ENCODE measurements at regions of chr9 and their contacts with region 1.

Region 1: GRCh38 chr9:128067876-128068613 is at the start of gene SLC25A25:
- DNase-seq: peak; percentile 100
- H3K4me3 Mint-ChIP-seq: peak within 1 kb of the TSS; percentile 92
- H3K27ac Mint-ChIP-seq: peak within 1 kb of the TSS; percentile 83
- H3K4me1 Mint-ChIP-seq: peaks cover 53% of the 10 kb centered on the region
- H3K27me3 Mint-ChIP-seq: no peaks in the 10 kb centered on the region
- total RNA-seq, gene SLC25A25: 13.4 and 13.5 TPM in 2 replicates

Region 2: GRCh38 chr9:127785023-127785932 is 282.8 kb before region 1 on chr9:
- intact Hi-C with region 1: loop called (anchors 5 kb)
- DNase-seq: peak; percentile 87
- H3K4me3 Mint-ChIP-seq: peak overlapping the region; percentile 96
- H3K27ac Mint-ChIP-seq: peak overlapping the region; percentile 99
- H3K4me1 Mint-ChIP-seq: peaks cover 67% of the 10 kb centered on the region
- H3K27me3 Mint-ChIP-seq: no peaks in the 10 kb centered on the region

Region 3: DNA sequence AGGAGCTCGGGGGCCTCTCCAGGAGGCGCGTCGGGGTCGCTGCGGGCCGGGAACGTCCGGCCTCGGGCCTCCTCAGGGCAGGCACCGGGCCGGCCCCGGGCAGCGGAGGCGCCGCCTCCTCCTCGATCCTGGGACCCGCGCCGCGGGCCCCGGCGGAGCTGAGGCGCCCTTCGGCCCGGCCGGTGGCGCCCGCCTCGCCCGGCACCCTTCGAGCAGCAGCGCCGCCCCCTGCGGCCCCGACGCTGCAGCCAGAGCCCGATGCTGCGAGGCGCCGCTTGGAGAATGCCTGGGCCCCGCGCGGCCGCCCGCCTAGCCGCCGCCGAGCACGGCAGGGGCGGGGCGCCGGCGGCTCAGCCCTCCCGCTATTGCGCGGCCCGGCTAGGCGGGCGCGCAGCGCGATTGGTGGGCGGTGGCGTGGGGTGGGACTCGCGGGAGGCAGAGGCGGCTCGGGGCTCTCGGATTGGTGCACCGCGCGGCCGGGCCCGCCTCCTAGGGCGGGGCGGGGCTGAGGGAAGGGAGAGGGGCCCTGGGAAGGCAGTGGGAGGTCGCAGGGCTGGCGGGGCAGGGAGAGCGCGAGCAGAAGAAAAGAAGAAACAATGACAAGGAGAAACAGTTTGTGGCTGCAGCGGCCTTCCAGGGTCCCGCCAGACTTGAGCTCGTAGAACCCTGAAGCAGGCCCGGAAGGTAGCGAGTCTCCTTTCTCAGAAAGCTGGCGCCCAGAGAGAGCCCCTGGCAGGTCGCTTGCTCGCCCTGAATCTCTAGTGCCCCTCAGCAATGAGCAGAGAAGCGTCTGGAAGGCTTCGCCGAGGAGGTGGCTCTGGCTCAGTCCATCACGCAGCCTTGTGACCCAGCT is 87.1 kb before region 1 on chr9 and contains the start of gene EEIG1:
- intact Hi-C with region 1: loop called (anchors 1 kb)
- DNase-seq: peak; percentile 98
- H3K4me3 Mint-ChIP-seq: peak within 1 kb of the TSS; percentile 93
- H3K27ac Mint-ChIP-seq: peak within 1 kb of the TSS; percentile 84
- H3K4me1 Mint-ChIP-seq: peaks cover 48% of the 10 kb centered on the region
- H3K27me3 Mint-ChIP-seq: no peaks in the 10 kb centered on the region
- total RNA-seq, gene EEIG1: 39.8 and 43.4 TPM in 2 replicates

Region 4: DNA sequence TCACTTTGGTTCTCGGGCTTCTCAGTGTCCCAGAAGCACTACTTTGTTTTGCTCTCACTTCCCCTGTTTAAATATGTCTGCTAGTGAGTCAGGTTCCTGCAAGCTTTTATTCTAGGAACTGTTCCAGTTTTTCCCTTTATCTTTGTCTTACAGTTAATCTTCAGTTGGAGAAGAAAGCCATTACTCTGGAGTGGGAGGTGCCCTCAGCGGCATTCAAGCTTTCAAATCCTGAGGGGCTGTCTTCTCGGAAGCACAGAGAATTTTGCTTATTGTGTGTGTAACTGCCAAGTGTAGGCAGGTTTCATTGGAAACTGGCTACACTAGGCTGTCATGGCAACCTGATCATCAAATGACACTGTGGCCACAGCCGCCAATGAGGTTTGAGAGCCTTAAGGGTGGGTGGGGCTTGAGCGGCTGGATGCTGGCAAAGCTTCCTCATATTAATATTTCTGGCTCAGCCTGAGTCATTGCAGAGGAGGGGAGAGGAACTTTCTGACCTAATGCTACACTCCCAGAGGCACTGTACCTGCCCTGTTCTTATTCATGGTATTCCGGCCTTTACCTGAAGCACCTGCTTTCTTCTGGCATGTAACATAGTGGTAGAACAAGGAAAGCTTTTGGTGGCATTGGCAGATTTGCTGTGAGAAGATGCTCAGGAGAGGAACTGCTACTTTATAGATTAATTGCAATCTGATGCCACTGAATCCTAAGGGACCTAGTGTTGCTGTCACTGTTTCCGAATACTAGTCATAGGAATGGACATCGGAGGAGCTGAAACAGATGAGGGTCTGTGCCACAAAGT is 26.3 kb after region 1 on chr9:
- intact Hi-C with region 1: loop called (anchors 1 kb)
- DNase-seq: peak; percentile 79
- H3K4me3 Mint-ChIP-seq: peak overlapping the region; percentile 70
- H3K27ac Mint-ChIP-seq: peak overlapping the region; percentile 95
- H3K4me1 Mint-ChIP-seq: peaks cover 48% of the 10 kb centered on the region
- H3K27me3 Mint-ChIP-seq: no peaks in the 10 kb centered on the region

Region 5: GRCh38 chr9:128191406-128192046 is 123.5 kb after region 1 on chr9 and contains the start of gene CIZ1:
- intact Hi-C with region 1: loop called (anchors 5 kb)
- DNase-seq: peak; percentile 69
- H3K4me3 Mint-ChIP-seq: peak within 1 kb of the TSS; percentile 98
- H3K27ac Mint-ChIP-seq: peak within 1 kb of the TSS; percentile 96
- H3K4me1 Mint-ChIP-seq: peaks cover 23% of the 10 kb centered on the region
- H3K27me3 Mint-ChIP-seq: no peaks in the 10 kb centered on the region
- total RNA-seq, gene CIZ1: 154 and 158 TPM in 2 replicates

Measured in activated T-helper 1 cell treated with anti-CD3 and anti-CD28 coated beads, Interleukin-12 subunit alpha, Interleukin-12 subunit beta, Interleukin-2, Interleukin-4 antibody, amounts not matched to agents 30 ng/mL and 10 ng/mL and 1 ng/mL, durations not matched to agents 14 hours and 24 hours and 36 hours (primary cell).